Activated CD8-positive, alpha-beta T cell treated with anti-CD3 and anti-CD28 coated beads, Interleukin-2, amount 10 ng/mL, durations not matched to agents 7 days and 5 days (primary cell): ENCODE measurements at regions of chr1 and their contacts with region 1.

Region 1: GRCh38 chr1:43974443-43975248 is at the start of gene ATP6V0B:
- DNase-seq: peak; percentile 97
- ATAC-seq: peak; percentile 77
- H3K4me3 Mint-ChIP-seq: peak within 1 kb of the TSS; percentile 89
- H3K27ac Mint-ChIP-seq: peak within 1 kb of the TSS; percentile 89
- H3K4me1 Mint-ChIP-seq: peaks cover 58% of the 10 kb centered on the region
- H3K27me3 Mint-ChIP-seq: no peaks in the 10 kb centered on the region
- total RNA-seq, gene ATP6V0B: 116 to 117 TPM

Region 2: GRCh38 chr1:43858328-43858731 is 116.3 kb before region 1 on chr1:
- CTCF ChIA-PET with region 1: no interaction called
- POLR2A ChIA-PET with region 1: no interaction called
- DNase-seq: no peak
- ATAC-seq: no peak
- H3K4me3 Mint-ChIP-seq: no peak overlapping the region
- H3K27ac Mint-ChIP-seq: no peak overlapping the region
- H3K4me1 Mint-ChIP-seq: peaks cover 12% of the 10 kb centered on the region
- H3K27me3 Mint-ChIP-seq: no peaks in the 10 kb centered on the region

Region 3: GRCh38 chr1:43946236-43947060 is 28.2 kb before region 1 on chr1 and contains the start of gene IPO13:
- CTCF ChIA-PET with region 1: interaction called, 11 read pairs
- POLR2A ChIA-PET with region 1: interaction called, 6 read pairs
- DNase-seq: peak; percentile 97
- ATAC-seq: peak; percentile 97
- H3K4me3 Mint-ChIP-seq: peak within 1 kb of the TSS; percentile 82
- H3K27ac Mint-ChIP-seq: peak within 1 kb of the TSS; percentile 94
- H3K4me1 Mint-ChIP-seq: peaks cover 34% of the 10 kb centered on the region
- H3K27me3 Mint-ChIP-seq: no peaks in the 10 kb centered on the region
- total RNA-seq, gene IPO13: 23.7 to 24.5 TPM